ENCODE measurements at regions of chr13 and their contacts with region 1.

Region 1: GRCh38 chr13:35157143-35157755 is 215.2 kb downstream of the NBEA start:
- H3K4me3 Mint-ChIP-seq: no peak overlapping the region
- H3K27ac Mint-ChIP-seq: no peak overlapping the region
- H3K4me1 Mint-ChIP-seq: peaks cover 11% of the 10 kb centered on the region
- H3K27me3 Mint-ChIP-seq: no peaks in the 10 kb centered on the region

Region 2: DNA sequence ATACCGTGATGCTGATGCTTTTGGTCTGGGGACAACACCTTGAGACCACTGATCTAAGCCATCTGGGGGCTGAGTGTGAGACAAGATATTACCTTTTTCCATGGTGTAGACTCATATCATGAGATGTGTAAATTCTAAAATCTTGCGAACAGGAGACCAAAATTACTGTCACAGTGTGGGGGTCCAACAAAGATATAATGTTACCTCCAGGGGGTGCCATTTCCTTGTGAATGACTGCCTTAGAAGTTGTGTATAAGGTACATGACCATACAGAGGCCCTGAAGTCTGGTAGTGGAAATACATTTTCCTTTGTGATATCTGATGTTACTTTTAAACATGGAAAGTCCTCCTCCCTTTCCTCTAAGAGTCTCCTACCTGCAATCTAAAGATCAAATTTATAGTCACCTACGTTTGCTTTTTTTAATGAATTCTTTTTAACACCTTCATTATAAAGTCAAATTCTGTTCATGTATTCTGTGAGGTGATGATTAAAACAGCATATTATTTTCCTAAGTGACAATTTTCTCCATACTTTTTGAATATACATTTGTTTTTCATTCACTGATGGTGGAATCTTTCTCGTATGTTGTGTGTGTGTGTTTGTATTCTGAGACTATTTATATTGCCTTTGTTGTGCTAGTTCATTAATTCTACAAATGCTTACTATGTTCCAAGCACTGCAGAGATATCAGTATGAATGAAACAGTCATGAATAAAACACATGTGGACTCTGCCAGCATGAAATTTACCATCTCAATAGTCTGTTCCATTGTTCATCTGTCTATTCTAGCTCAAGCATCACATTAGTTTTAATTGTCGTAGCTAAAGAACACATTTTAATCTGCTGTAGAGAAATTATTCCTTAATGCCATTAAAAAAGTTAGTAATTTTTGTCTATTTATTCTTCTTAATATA is 1225.6 kb before region 1 on chr13:
- intact Hi-C with region 1: loop called (anchors 5 kb)
- H3K4me3 Mint-ChIP-seq: no peak overlapping the region
- H3K27ac Mint-ChIP-seq: no peak overlapping the region
- H3K4me1 Mint-ChIP-seq: peaks cover 7% of the 10 kb centered on the region
- H3K27me3 Mint-ChIP-seq: no peaks in the 10 kb centered on the region

Region 3: DNA sequence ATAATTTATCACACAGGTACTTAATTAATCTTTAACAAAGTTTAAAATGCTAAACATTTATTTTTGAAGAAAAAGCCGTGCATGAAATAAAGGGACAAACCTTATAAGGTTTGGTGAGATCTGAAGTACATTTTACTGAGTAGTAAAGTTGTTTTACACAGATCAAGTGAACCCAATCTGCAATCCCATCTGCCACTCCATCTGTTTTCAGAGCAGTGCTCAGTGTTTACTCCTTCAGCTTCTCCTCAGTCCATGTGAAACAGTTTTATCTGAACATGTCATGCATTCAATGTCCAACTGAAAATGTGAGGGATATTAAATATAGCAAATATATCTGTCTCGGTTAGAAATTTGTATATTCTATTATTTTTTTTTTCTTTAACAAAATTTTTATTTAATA is 152.5 kb after region 1 on chr13:
- intact Hi-C with region 1: no loop called
- H3K4me3 Mint-ChIP-seq: no peak overlapping the region
- H3K27ac Mint-ChIP-seq: no peak overlapping the region
- H3K4me1 Mint-ChIP-seq: no peaks in the 10 kb centered on the region
- H3K27me3 Mint-ChIP-seq: no peaks in the 10 kb centered on the region